B cell (primary cell): ENCODE measurements at regions of chr17 and their contacts with region 1.

Region 1: GRCh38 chr17:4796553-4796921 is 573 bp downstream of the PSMB6 start:
- DNase-seq: no peak
- ATAC-seq: no peak
- H3K4me3 ChIP-seq: peak overlapping the region; percentile 65 to 96 (median 86)
- H3K4me3 Mint-ChIP-seq: peak overlapping the region; percentile 100
- H3K27ac ChIP-seq: peak overlapping the region in 1 of 2 donors; percentile 68
- H3K27ac Mint-ChIP-seq: peak overlapping the region; percentile 97
- H3K4me1 ChIP-seq: peaks cover 7 to 16% of the 10 kb centered on the region in 2 donors
- H3K4me1 Mint-ChIP-seq: peaks cover 11% of the 10 kb centered on the region
- H3K27me3 ChIP-seq: no peaks in the 10 kb centered on the region
- H3K27me3 Mint-ChIP-seq: no peaks in the 10 kb centered on the region
- CTCF ChIP-seq: no peak

Region 2: DNA sequence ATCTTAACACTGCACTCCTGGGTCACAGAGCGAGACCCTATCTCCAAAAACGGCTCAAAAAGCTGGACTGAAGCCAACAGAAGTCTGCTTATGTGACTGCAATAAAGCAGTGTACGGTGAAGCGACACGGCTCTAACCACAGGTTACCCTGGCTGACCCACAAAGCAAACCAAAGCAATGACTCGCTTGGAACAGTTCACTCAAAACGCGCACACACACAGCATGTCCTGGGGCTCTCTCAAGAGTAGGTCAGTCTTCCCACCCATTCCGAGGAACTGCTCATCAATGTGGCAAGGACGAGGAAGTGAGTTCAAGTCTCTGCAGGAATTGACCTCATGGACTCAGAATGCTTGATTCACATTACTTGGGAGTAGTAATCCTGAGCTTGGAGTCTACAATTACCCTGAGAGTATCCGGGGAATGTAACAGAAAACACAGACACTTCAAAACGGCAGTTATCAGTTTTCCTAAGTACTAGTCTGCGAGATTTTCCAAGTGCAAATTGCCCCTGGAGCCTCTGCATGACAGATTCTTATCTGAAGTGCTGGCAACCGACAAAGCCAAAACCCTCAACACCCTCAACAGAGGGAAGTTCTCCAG is 118.0 kb before region 1 on chr17:
- CTCF ChIA-PET with region 1: no interaction called
- POLR2A ChIA-PET with region 1: no interaction called
- intact Hi-C with region 1: no loop called
- DNase-seq: no peak
- ATAC-seq: no peak
- H3K4me3 ChIP-seq: no peak overlapping the region
- H3K4me3 Mint-ChIP-seq: no peak overlapping the region
- H3K27ac ChIP-seq: no peak overlapping the region
- H3K27ac Mint-ChIP-seq: no peak overlapping the region
- H3K4me1 ChIP-seq: no peaks in the 10 kb centered on the region
- H3K4me1 Mint-ChIP-seq: no peaks in the 10 kb centered on the region
- H3K27me3 ChIP-seq: no peaks in the 10 kb centered on the region
- H3K27me3 Mint-ChIP-seq: no peaks in the 10 kb centered on the region
- CTCF ChIP-seq: no peak

Region 3: GRCh38 chr17:4771519-4772234 is 24.9 kb before region 1 on chr17 and contains the start of gene TM4SF5:
- CTCF ChIA-PET with region 1: no interaction called
- POLR2A ChIA-PET with region 1: no interaction called
- intact Hi-C with region 1: no loop called
- DNase-seq: no peak
- ATAC-seq: no peak
- H3K4me3 ChIP-seq: no peak within 1 kb of the TSS
- H3K4me3 Mint-ChIP-seq: no peak within 1 kb of the TSS
- H3K27ac ChIP-seq: no peak within 1 kb of the TSS
- H3K27ac Mint-ChIP-seq: no peak within 1 kb of the TSS
- H3K4me1 ChIP-seq: peaks cover 3 to 10% of the 10 kb centered on the region in 2 donors
- H3K4me1 Mint-ChIP-seq: peaks cover 9% of the 10 kb centered on the region
- H3K27me3 ChIP-seq: peaks cover 0 to 4% (median 0%) of the 10 kb centered on the region in 4 experiments
- H3K27me3 Mint-ChIP-seq: peaks cover 10% of the 10 kb centered on the region
- CTCF ChIP-seq: no peak
- total RNA-seq, gene TM4SF5: not detected in 2 replicates

Region 4: DNA sequence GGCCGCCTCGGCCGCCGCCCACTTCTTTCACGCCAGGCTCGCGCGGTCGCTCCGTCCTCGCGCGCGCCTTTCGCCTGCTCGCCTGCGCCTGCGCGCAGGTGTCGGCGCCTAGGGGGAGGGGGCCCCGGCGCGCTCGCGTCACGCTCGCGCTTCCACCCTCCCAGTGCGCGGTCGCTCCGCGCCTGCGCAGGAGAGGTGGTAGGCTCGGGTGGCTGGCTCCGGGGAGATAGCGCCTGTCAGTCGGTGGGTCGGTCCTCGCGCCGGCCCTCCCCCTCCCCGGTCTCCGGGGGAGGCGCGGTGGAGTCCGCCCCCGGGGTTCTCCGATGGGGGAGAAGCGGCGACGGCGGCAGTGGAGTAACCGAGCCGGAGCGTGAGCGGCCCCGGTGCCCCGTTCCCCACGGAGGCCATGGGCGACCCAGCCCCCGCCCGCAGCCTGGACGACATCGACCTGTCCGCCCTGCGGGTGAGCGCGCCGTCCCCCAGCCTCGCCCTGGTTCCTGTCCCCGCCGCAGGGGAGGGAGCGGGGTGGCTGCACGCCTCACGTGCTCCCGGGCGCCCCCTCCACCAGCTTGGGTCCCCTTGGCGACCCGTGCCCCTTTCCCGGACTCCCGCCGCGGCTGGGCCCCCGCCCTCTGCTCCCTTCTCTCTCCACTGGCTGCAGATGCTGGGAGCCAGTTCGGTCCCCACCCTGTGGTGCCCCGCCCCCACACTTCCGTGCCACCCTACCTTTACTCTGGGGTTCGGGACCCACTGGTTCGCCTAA is 36.8 kb after region 1 on chr17 and contains the start of gene MINK1:
- CTCF ChIA-PET with region 1: no interaction called
- POLR2A ChIA-PET with region 1: no interaction called
- intact Hi-C with region 1: loop called (anchors 1 kb)
- DNase-seq: peak; percentile 97
- ATAC-seq: peak; percentile 93
- H3K4me3 ChIP-seq: peak within 1 kb of the TSS; percentile 68 to 86 (median 79)
- H3K4me3 Mint-ChIP-seq: peak within 1 kb of the TSS; percentile 99
- H3K27ac ChIP-seq: peak within 1 kb of the TSS; percentile 77 to 85
- H3K27ac Mint-ChIP-seq: peak within 1 kb of the TSS; percentile 99
- H3K4me1 ChIP-seq: peaks cover 21 to 26% of the 10 kb centered on the region in 2 donors
- H3K4me1 Mint-ChIP-seq: peaks cover 29% of the 10 kb centered on the region
- H3K27me3 ChIP-seq: no peaks in the 10 kb centered on the region
- H3K27me3 Mint-ChIP-seq: no peaks in the 10 kb centered on the region
- CTCF ChIP-seq: no peak
- total RNA-seq, gene MINK1: 108 and 109 TPM in 2 replicates